ENCODE measurements at regions of chr1 and their contacts with region 1.

Region 1: DNA sequence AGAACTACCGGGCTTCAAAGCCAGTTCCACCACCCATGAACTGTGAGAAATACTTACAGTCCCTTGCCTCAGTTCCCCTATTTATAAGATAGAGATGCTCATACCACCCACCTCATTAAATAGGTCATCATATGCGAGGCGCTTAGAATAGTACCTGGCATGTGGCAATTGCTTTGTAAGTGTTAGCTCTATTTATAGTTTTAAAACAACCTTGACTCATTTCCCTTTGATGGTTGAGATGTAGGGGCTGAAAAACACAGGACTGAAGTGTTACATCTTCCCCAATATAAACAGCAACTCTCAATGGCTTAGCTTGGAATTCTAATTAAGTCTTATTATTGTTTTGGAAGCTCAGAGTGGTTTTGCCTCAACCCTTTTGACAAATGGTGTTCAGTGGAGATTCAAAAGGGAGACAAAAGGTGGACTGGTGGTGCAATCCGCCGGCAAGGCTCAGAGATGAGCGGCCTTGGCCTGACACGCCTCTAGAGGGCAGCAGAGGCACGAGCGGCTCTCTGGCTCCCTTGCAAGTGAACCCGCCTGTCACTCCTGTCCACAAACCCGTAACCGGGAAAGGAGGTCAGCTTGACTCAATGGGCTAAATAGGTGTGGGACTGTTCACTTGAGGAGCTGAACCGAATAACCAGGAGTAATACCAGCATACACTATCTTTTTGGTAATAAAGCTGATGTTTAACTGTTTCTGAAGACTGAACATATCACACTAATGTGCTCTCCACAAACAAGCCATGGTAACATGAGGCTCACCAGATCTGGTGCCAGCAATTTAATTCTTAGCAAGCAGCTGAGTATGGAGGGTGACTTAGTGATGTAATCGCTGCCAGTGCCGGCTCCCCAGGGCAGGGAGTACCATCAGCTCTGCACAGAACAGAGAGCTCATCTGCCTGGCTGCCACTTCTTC is 19.5 kb upstream of the SMYD2 start:
- DNase-seq: peak; percentile 89
- ATAC-seq: peak; percentile 99
- H3K4me3 ChIP-seq: peak overlapping the region; percentile 13; the same call in 1 of the 2 replicates
- H3K27ac ChIP-seq: no peak overlapping the region
- H3K4me1 ChIP-seq: peaks cover 15% of the 10 kb centered on the region
- H3K27me3 ChIP-seq: no peaks in the 10 kb centered on the region
- CTCF ChIP-seq: peak; percentile 99

Region 2: GRCh38 chr1:214012418-214012817 is 249.0 kb before region 1 on chr1:
- CTCF ChIA-PET with region 1: no interaction called
- POLR2A ChIA-PET with region 1: interaction called, 15 read pairs
- intact Hi-C with region 1: no loop called
- DNase-seq: peak; percentile 61
- ATAC-seq: peak; percentile 86
- H3K4me3 ChIP-seq: no peak overlapping the region
- H3K27ac ChIP-seq: no peak overlapping the region
- H3K4me1 ChIP-seq: no peaks in the 10 kb centered on the region
- H3K27me3 ChIP-seq: peaks cover 83% of the 10 kb centered on the region
- CTCF ChIP-seq: no peak

Region 3: GRCh38 chr1:214213136-214213535 is 48.3 kb before region 1 on chr1:
- CTCF ChIA-PET with region 1: interaction called, 5 read pairs
- POLR2A ChIA-PET with region 1: no interaction called
- intact Hi-C with region 1: loop called (anchors 1 kb)
- DNase-seq: peak; percentile 94
- ATAC-seq: peak; percentile 84
- H3K4me3 ChIP-seq: peak overlapping the region; percentile 0; the same call in 1 of the 2 replicates
- H3K27ac ChIP-seq: peak overlapping the region; percentile 19; the same call in 1 of the 2 replicates
- H3K4me1 ChIP-seq: peaks cover 56% of the 10 kb centered on the region
- H3K27me3 ChIP-seq: no peaks in the 10 kb centered on the region
- CTCF ChIP-seq: no peak

Region 4: DNA sequence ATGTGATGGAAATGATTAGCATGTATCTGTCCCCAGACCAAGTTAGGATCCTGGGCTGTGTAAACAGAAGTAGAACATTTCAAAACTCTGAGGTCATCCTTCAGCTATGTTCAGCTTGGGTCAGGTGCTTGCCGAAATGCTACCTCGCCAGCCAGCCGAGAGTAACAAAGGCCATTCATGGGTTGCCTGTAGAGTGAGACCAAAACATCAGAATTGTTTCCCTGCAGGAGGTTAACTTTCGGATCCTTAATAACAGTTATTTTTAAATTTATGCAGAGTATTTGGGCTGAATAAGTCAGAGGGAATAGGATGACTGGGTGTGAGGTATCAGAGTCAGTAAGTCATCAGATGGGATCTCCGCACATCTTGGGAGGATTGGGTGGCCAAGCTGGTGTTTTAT is 55.1 kb after region 1 on chr1:
- CTCF ChIA-PET with region 1: interaction called, 11 read pairs
- POLR2A ChIA-PET with region 1: no interaction called
- intact Hi-C with region 1: no loop called
- DNase-seq: peak; percentile 67
- ATAC-seq: peak; percentile 87
- H3K4me3 ChIP-seq: no peak overlapping the region
- H3K27ac ChIP-seq: no peak overlapping the region
- H3K4me1 ChIP-seq: peaks cover 8% of the 10 kb centered on the region
- H3K27me3 ChIP-seq: no peaks in the 10 kb centered on the region
- CTCF ChIP-seq: no peak

Region 5: GRCh38 chr1:214328770-214329469 is 67.5 kb after region 1 on chr1:
- CTCF ChIA-PET with region 1: interaction called, 27 read pairs
- POLR2A ChIA-PET with region 1: no interaction called
- intact Hi-C with region 1: loop called (anchors 1 kb)
- DNase-seq: peak; percentile 96
- ATAC-seq: peak; percentile 93
- H3K4me3 ChIP-seq: no peak overlapping the region
- H3K27ac ChIP-seq: no peak overlapping the region
- H3K4me1 ChIP-seq: peaks cover 4% of the 10 kb centered on the region
- H3K27me3 ChIP-seq: no peaks in the 10 kb centered on the region
- CTCF ChIP-seq: peak; percentile 96

Region 6: DNA sequence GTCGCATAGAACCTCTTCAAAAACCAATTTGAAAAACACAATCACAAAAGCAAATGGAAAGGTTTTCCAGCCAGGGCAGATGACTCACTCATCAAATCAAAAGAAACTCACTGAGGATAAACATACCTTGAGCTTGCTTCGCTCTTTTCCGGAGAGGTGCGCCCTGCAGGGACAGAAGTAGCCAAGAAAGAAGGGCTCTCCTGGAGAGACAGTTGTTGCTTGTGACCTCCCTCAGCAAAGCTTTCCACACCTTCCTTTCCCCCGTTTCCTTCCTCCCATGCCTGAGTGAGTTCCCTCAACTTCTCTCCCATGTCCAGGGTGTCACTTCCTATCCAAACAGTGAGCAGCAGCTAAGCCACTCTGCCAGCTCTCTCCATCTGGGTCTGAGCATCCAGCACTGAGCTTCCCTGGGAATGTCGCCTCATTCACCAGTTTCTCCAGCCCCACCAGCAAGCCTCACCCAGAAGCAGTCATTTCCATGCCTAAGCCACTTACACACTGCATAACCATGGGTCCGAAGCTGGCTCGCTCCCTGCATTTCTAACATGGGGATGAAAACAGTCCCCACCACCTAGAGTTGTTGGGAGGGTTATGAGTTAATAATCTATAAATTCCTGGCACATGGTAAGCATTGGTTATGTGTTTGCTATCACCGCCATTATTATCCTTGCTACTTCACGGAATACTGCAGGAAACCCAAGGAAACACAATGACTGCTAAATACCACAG is 214.9 kb after region 1 on chr1:
- CTCF ChIA-PET with region 1: no interaction called
- POLR2A ChIA-PET with region 1: no interaction called
- intact Hi-C with region 1: no loop called
- DNase-seq: peak; percentile 78
- ATAC-seq: peak; percentile 88
- H3K4me3 ChIP-seq: peak overlapping the region; percentile 28; the same call in 1 of the 2 replicates
- H3K27ac ChIP-seq: peak overlapping the region; percentile 56
- H3K4me1 ChIP-seq: peaks cover 33% of the 10 kb centered on the region
- H3K27me3 ChIP-seq: no peaks in the 10 kb centered on the region
- CTCF ChIP-seq: no peak

Region 7: GRCh38 chr1:214615871-214616270 is 354.4 kb after region 1 on chr1:
- CTCF ChIA-PET with region 1: no interaction called
- POLR2A ChIA-PET with region 1: no interaction called
- intact Hi-C with region 1: no loop called
- DNase-seq: peak; percentile 25
- ATAC-seq: no peak
- H3K4me3 ChIP-seq: no peak overlapping the region
- H3K27ac ChIP-seq: no peak overlapping the region
- H3K4me1 ChIP-seq: peaks cover 31% of the 10 kb centered on the region
- H3K27me3 ChIP-seq: no peaks in the 10 kb centered on the region
- CTCF ChIP-seq: no peak

Measured in PC-3 (cell line).